H1 (cell line): ENCODE measurements at regions of chr16 and their contacts with region 1.

Region 1: DNA sequence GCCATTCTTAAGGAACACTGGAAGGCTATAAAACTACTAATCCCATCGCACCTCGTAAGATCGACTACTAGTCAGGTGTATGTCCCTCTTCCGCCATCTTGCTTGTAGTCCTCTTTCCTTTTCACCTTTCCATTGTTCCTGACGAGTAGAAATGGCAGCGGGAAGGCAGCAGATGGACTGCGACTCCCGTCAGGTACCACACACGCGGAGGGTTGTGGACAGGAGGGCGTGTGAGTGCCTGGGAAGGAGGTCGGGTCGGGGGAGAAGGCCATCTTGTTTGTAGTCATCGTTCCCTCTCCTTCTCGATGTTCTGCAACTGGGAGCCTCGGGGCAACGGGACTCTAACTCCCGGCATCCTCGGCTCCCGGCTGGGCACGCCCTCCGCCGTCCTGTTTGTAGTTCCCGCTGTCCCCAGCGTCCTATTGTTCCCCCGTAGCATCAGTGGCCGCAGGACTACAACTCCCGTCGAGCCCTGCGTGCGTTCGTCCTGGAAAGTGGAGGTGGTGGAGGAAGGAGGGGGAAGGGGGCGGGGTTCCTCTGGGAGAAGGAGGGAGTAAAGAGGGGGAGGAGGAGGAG is 324 bp upstream of the FBXL19 start:
- DNase-seq: peak; percentile 92 to 99
- H3K4me3 ChIP-seq: peak overlapping the region; percentile 57 to 88 (median 84)
- H3K27ac ChIP-seq: peak overlapping the region; percentile 98
- H3K4me1 ChIP-seq: peaks cover 0 to 9% (median 2%) of the 10 kb centered on the region in 4 experiments; a peak in 4 of 7 replicates
- H3K27me3 ChIP-seq: no peaks in the 10 kb centered on the region
- CTCF ChIP-seq: no peak
- EP300 ChIP-seq: no peak
- POLR2A ChIP-seq: peak; percentile 43 to 78
- RAD21 ChIP-seq: no peak

Region 2: GRCh38 chr16:30335598-30336474 is 587.2 kb before region 1 on chr16:
- CTCF ChIA-PET with region 1: no interaction called
- POLR2A ChIA-PET with region 1: no interaction called
- DNase-seq: no peak
- H3K4me3 ChIP-seq: peak overlapping the region in 1 of 4 experiments; percentile 69; a peak in 2 of 8 replicates
- H3K27ac ChIP-seq: no peak overlapping the region
- H3K4me1 ChIP-seq: peaks cover 0 to 3% (median 0%) of the 10 kb centered on the region in 4 experiments; a peak in 1 of 7 replicates
- H3K27me3 ChIP-seq: no peaks in the 10 kb centered on the region
- CTCF ChIP-seq: no peak
- EP300 ChIP-seq: no peak
- POLR2A ChIP-seq: no peak
- RAD21 ChIP-seq: no peak

Region 3: DNA sequence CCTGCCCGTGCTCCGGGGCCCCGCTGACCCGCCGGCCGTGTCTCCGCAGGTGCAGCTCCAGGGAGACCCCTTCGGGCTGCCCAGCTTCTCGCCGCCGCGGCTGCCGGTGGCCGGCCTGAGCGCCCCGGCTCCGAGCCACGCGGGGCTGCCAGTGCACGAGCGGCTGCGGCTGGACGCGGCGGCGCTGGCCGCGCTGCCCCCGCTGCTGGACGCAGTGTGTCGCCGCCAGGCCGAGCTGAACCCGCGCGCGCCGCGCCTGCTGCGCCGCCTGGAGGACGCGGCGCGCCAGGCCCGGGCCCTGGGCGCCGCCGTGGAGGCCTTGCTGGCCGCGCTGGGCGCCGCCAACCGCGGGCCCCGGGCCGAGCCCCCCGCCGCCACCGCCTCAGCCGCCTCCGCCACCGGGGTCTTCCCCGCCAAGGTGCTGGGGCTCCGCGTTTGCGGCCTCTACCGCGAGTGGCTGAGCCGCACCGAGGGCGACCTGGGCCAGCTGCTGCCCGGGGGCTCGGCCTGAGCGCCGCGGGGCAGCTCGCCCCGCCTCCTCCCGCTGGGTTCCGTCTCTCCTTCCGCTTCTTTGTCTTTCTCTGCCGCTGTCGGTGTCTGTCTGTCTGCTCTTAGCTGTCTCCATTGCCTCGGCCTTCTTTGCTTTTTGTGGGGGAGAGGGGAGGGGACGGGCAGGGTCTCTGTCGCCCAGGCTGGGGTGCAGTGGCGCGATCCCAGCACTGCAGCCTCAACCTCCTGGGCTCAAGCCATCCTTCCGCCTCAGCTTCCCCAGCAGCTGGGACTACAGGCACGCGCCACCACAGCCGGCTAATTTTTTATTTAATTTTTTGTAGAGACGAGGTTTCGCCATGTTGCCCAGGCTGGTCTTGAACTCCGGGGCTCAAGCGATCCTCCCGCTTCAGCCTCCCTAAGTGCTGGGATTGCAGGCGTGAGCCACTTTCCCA is 20.7 kb before region 1 on chr16:
- CTCF ChIA-PET with region 1: interaction called, 22 read pairs
- POLR2A ChIA-PET with region 1: interaction called, 12 read pairs
- DNase-seq: peak in 1 of 2 experiments; percentile 81
- H3K4me3 ChIP-seq: peak overlapping the region; percentile 42 to 67 (median 53)
- H3K27ac ChIP-seq: peak overlapping the region; percentile 18; the same call in 1 of the 2 replicates
- H3K4me1 ChIP-seq: peaks cover 2 to 5% (median 4%) of the 10 kb centered on the region in 4 experiments; a peak in 5 of 7 replicates
- H3K27me3 ChIP-seq: peaks cover 0 to 19% (median 3%) of the 10 kb centered on the region in 4 experiments; a peak in 4 of 7 replicates
- CTCF ChIP-seq: peak; percentile 43 to 72 (median 69)
- EP300 ChIP-seq: 0 out of 3 replicates have a peak, but pooled peaks of 1 of the 2 experiments have one; percentile 8
- POLR2A ChIP-seq: no peak
- RAD21 ChIP-seq: peak in 1 of 2 experiments; percentile 51; a peak in 2 of 4 replicates

Region 4: DNA sequence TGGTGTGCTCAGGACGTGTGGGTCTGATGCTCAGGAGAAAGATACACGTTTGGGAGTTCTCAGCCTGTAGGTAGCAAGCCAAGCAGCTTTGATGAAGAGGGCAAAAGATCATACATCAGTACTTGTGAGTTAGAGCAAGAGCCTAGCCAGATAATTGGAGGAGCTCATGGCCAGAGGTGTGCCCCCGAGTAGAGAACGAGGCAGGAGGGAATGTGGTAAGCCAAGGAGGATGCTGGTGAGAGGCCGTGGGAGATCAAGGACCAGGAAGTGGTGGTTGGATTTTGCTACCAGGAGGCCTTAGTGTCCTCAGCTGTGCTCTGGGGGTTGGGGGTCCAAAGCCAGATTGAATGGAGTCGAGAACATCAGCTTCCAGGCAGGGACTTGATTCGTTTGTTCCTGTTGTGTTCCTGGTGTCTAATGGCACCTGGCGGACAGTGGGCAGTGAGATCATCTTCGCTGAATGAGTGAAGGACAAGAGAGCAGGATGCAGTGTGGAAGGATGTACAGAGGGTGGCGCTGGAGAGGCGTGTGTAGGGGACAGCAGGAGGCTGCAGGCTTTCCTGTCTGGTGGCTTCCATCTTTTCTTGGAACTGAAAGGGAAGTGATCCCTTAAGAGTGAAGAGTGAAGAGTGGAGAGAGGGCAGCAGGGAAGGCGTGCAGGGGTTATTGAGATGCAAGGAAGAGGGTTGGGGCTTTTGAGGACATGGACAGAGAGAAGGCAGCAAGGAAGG is 11.9 kb after region 1 on chr16:
- CTCF ChIA-PET with region 1: interaction called, 21 read pairs
- POLR2A ChIA-PET with region 1: interaction called, 105 read pairs
- DNase-seq: peak in 1 of 2 experiments; percentile 87
- H3K4me3 ChIP-seq: no peak overlapping the region
- H3K27ac ChIP-seq: peak overlapping the region; percentile 50
- H3K4me1 ChIP-seq: no peaks in the 10 kb centered on the region
- H3K27me3 ChIP-seq: no peaks in the 10 kb centered on the region
- CTCF ChIP-seq: peak; percentile 74 to 97 (median 94)
- EP300 ChIP-seq: no peak
- POLR2A ChIP-seq: no peak
- RAD21 ChIP-seq: peak; percentile 57 to 68

Region 5: DNA sequence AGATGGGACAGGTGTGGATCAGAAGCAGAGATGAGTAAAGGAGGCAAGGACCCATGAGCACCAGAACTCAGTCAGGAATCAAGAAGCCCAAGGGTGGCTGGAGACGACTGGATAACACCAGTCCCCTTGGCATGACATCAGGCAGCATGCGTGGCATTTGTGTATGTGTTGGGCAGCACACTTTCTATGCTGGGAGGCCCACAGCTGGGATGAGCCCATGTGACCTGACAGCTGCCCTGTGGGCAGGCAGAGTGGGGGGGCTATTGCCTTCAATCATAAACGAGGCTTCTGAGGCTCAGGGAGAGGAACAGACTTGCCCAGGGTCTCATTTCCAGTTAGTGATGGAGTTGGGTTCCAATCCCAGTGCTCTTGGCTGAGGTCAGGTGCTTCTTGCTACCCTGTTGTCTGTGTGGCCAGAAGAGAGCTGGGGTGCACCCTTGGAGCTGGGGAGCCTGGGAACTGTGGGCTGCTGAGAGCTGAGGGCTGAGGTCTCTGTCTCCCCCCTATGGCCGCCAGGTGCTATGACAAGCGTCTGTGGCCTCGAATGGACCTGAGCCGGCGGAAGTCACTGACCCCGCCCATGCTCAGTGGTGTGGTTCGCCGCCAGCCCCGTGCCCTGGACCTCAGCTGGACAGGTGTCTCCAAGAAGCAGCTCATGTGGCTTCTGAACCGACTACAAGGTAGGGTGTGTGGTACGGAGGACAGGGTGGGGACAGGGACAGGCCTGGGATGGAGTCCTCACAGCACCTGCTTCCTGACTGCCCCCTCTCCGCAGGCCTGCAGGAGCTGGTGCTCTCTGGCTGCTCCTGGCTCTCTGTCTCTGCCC is 18.8 kb after region 1 on chr16:
- CTCF ChIA-PET with region 1: interaction called, 33 read pairs
- POLR2A ChIA-PET with region 1: interaction called, 105 read pairs
- DNase-seq: peak in 1 of 2 experiments; percentile 87
- H3K4me3 ChIP-seq: 0 out of 8 replicates have a peak overlapping the region, but pooled peaks of 2 of the 4 experiments have one; percentile 1 to 10
- H3K27ac ChIP-seq: no peak overlapping the region
- H3K4me1 ChIP-seq: peaks cover 0 to 13% (median 8%) of the 10 kb centered on the region in 4 experiments; a peak in 6 of 7 replicates
- H3K27me3 ChIP-seq: no peaks in the 10 kb centered on the region
- CTCF ChIP-seq: peak; percentile 84 to 97 (median 93)
- EP300 ChIP-seq: no peak; a peak in 1 of 3 replicates
- POLR2A ChIP-seq: no peak
- RAD21 ChIP-seq: peak; percentile 74 to 83

Region 6: DNA sequence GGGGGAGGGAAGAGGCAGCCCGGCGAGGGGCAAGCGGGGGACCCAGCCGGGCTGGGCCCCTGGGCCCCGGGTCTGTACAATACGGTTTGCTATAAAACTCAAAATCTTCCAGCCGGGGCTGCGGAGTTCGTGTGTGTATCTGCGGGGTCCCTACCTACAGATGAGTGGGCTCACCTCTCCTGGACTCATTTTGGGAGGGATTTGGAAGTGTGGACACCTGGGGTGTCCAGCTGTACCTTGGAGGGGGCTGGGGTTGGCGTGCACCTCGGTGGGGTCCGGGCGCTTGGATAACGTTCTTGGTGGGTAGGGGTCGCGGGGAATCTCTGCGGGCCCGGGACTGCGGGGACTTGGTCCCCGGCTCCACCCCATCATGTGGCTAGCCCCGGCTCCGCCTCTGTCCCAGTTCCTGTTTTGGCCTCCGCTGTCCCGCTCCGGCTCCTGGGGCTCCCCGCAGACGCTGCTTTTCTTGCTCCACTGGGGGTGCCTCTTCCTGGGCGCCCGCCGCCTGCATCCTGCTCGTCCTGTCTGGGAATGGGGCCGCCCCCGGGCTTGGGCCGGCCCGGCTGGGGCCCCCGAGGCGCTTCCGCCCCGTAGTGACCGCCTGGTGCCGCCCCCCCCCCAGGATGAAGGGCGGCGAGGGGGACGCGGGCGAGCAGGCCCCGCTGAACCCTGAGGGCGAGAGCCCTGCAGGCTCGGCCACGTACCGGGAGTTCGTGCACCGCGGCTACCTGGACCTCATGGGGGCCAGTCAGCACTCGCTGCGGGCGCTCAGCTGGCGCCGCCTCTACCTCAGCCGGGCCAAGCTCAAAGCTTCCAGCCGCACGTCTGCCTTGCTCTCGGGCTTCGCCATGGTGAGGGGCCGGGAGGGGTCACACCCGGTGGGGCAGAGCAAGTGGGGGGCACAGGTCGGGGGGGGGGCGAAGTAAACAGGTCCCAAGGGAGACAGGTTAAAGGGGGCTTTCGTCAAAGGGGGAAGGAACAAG is 25.9 kb after region 1 on chr16 and contains the start of gene ORAI3:
- CTCF ChIA-PET with region 1: interaction called, 3 read pairs
- POLR2A ChIA-PET with region 1: interaction called, 21 read pairs
- DNase-seq: peak in 1 of 2 experiments; percentile 79
- H3K4me3 ChIP-seq: peak within 1 kb of the TSS; percentile 64 to 98 (median 70)
- H3K27ac ChIP-seq: peak within 1 kb of the TSS; percentile 89
- H3K4me1 ChIP-seq: peaks cover 0 to 31% (median 22%) of the 10 kb centered on the region in 4 experiments; a peak in 6 of 7 replicates
- H3K27me3 ChIP-seq: no peaks in the 10 kb centered on the region
- CTCF ChIP-seq: no peak
- EP300 ChIP-seq: no peak
- POLR2A ChIP-seq: peak; percentile 25 to 76
- RAD21 ChIP-seq: no peak
- total RNA-seq, gene ORAI3: 8.7 and 10.0 TPM in 2 replicates

Region 7: DNA sequence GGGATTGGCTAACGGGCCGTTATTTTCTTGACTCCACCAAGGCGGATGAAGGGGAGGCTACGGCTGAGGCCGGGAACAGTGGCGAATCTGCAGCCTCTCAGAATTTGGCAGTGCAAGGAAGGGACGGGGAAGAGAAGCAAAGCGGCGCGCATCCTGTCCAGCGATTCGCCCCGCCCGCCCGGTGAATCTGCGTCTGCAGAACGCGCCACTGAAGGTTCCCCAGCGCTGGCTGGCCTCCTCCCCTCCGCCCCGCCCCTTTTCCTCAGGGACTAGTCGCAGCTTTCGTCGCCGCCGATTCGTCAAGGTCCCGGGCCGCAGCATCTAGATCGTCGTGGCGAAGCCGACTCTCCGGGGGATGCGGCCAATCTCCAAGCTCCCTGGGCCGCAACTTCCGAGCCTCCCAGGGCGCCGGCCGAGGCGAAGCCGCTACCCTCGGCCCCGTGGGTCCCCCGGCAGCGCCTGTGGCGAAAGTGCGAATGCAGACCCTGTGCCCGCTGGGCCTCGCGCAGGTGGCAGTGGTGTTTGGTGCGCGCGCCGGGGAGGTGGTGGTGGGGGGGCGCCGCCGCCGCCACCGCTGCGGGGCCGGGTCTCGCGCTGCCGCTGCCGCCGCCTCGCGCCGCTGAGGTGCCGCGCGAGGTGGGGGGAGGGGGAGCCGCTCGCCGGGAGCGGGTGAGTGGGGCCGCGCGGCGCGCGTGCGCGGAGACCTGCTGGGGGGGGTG is 34.6 kb after region 1 on chr16 and contains the start of gene SETD1A:
- CTCF ChIA-PET with region 1: interaction called, 3 read pairs
- POLR2A ChIA-PET with region 1: interaction called, 16 read pairs
- DNase-seq: peak in 1 of 2 experiments; percentile 96
- H3K4me3 ChIP-seq: peak within 1 kb of the TSS; percentile 60 to 96 (median 90)
- H3K27ac ChIP-seq: peak within 1 kb of the TSS; percentile 100
- H3K4me1 ChIP-seq: peaks cover 0 to 9% (median 2%) of the 10 kb centered on the region in 4 experiments; a peak in 3 of 7 replicates
- H3K27me3 ChIP-seq: no peaks in the 10 kb centered on the region
- CTCF ChIP-seq: no peak
- EP300 ChIP-seq: peak in 1 of 2 experiments; percentile 98; a peak in 1 of 3 replicates
- POLR2A ChIP-seq: peak in 1 of 2 experiments; percentile 54; a peak in 1 of 3 replicates
- RAD21 ChIP-seq: no peak
- total RNA-seq, gene SETD1A: 29.0 and 29.6 TPM in 2 replicates